ENCODE measurements at regions of chr12 and their contacts with region 1.

Region 1: GRCh38 chr12:130775953-130776856 is 60.1 kb upstream of the RIMBP2 start:
- DNase-seq: peak; percentile 89
- ATAC-seq: peak; percentile 100
- H3K4me3 Mint-ChIP-seq: peak overlapping the region; percentile 50
- H3K27ac Mint-ChIP-seq: peak overlapping the region; percentile 38
- H3K4me1 Mint-ChIP-seq: peaks cover 13% of the 10 kb centered on the region
- H3K27me3 Mint-ChIP-seq: peaks cover 27% of the 10 kb centered on the region

Region 2: GRCh38 chr12:130796985-130797686 is 20.9 kb after region 1 on chr12:
- CTCF ChIA-PET with region 1: interaction called, 3 read pairs
- POLR2A ChIA-PET with region 1: interaction called, 3 read pairs
- intact Hi-C with region 1: loop called in 1 of 2 experiments (anchors 1 kb)
- DNase-seq: peak; percentile 76
- ATAC-seq: peak; percentile 96
- H3K4me3 Mint-ChIP-seq: peak overlapping the region; percentile 49
- H3K27ac Mint-ChIP-seq: peak overlapping the region; percentile 88
- H3K4me1 Mint-ChIP-seq: peaks cover 19% of the 10 kb centered on the region
- H3K27me3 Mint-ChIP-seq: no peaks in the 10 kb centered on the region

Region 3: DNA sequence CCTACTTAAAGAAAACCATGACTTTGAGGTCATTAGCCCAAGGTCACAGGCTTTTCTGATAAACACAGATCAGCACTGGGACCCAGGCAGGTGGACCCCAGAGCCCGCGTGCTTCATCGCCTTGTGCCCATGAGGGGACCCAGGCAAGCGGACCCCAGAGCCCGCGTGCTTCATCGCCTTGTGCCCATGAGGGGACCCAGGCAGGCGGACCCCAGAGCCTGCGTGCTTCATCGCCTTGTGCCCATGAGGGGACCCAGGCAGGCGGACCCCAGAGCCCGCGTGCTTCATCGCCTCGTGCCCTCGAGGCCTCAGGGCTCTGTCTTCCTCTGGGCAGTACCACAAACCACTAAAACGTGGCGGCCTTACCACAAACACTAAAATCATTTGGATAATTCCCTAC is 31.1 kb after region 1 on chr12:
- CTCF ChIA-PET with region 1: no interaction called
- POLR2A ChIA-PET with region 1: no interaction called
- intact Hi-C with region 1: no loop called
- DNase-seq: no peak
- ATAC-seq: no peak
- H3K4me3 Mint-ChIP-seq: no peak overlapping the region
- H3K27ac Mint-ChIP-seq: no peak overlapping the region
- H3K4me1 Mint-ChIP-seq: no peaks in the 10 kb centered on the region
- H3K27me3 Mint-ChIP-seq: no peaks in the 10 kb centered on the region

Region 4: GRCh38 chr12:130818635-130819576 is 42.7 kb after region 1 on chr12:
- CTCF ChIA-PET with region 1: interaction called, 3 read pairs
- POLR2A ChIA-PET with region 1: no interaction called
- intact Hi-C with region 1: loop called (anchors 1 to 5 kb)
- DNase-seq: peak; percentile 89
- ATAC-seq: peak; percentile 92
- H3K4me3 Mint-ChIP-seq: peak overlapping the region; percentile 77
- H3K27ac Mint-ChIP-seq: peak overlapping the region; percentile 86
- H3K4me1 Mint-ChIP-seq: peaks cover 6% of the 10 kb centered on the region
- H3K27me3 Mint-ChIP-seq: no peaks in the 10 kb centered on the region

Measured in activated CD4-positive, alpha-beta T cell treated with anti-CD3 and anti-CD28 coated beads for 36 hours (primary cell).